ENCODE measurements at regions of chr6 and their contacts with region 1.

Region 1: GRCh38 chr6:25070547-25071366 is 135.0 kb upstream of the RIPOR2 start:
- DNase-seq: peak; percentile 88
- H3K4me3 ChIP-seq: no peak overlapping the region
- H3K27ac ChIP-seq: no peak overlapping the region
- H3K4me1 ChIP-seq: no peaks in the 10 kb centered on the region
- H3K27me3 ChIP-seq: no peaks in the 10 kb centered on the region
- CTCF ChIP-seq: peak; percentile 89

Region 2: GRCh38 chr6:24581084-24581669 is 489.6 kb before region 1 on chr6:
- CTCF ChIA-PET with region 1: interaction called, 3 read pairs
- POLR2A ChIA-PET with region 1: no interaction called
- intact Hi-C with region 1: loop called (anchors 5 kb)
- DNase-seq: peak; percentile 80
- H3K4me3 ChIP-seq: no peak overlapping the region
- H3K27ac ChIP-seq: no peak overlapping the region
- H3K4me1 ChIP-seq: peaks cover 17% of the 10 kb centered on the region
- H3K27me3 ChIP-seq: peaks cover 20% of the 10 kb centered on the region
- CTCF ChIP-seq: peak; percentile 90

Region 3: GRCh38 chr6:24720604-24721460 is 349.9 kb before region 1 on chr6:
- CTCF ChIA-PET with region 1: no interaction called
- POLR2A ChIA-PET with region 1: no interaction called
- intact Hi-C with region 1: loop called (anchors 2 kb)
- DNase-seq: peak; percentile 100
- H3K4me3 ChIP-seq: peak overlapping the region; percentile 81
- H3K27ac ChIP-seq: peak overlapping the region; percentile 94
- H3K4me1 ChIP-seq: peaks cover 11% of the 10 kb centered on the region
- H3K27me3 ChIP-seq: no peaks in the 10 kb centered on the region
- CTCF ChIP-seq: no peak

Region 4: GRCh38 chr6:24774696-24775519 is 295.8 kb before region 1 on chr6 and contains the start of gene GMNN:
- CTCF ChIA-PET with region 1: no interaction called
- POLR2A ChIA-PET with region 1: no interaction called
- intact Hi-C with region 1: loop called (anchors 10 kb)
- DNase-seq: peak; percentile 98
- H3K4me3 ChIP-seq: peak within 1 kb of the TSS; percentile 76
- H3K27ac ChIP-seq: peak within 1 kb of the TSS; percentile 99
- H3K4me1 ChIP-seq: peaks cover 10% of the 10 kb centered on the region
- H3K27me3 ChIP-seq: no peaks in the 10 kb centered on the region
- CTCF ChIP-seq: no peak
- total RNA-seq, gene GMNN: 100 and 111 TPM in 2 replicates

Region 5: GRCh38 chr6:24855395-24856245 is 215.1 kb before region 1 on chr6:
- CTCF ChIA-PET with region 1: interaction called, 20 read pairs
- POLR2A ChIA-PET with region 1: no interaction called
- intact Hi-C with region 1: loop called (anchors 1 kb)
- DNase-seq: peak; percentile 79
- H3K4me3 ChIP-seq: no peak overlapping the region
- H3K27ac ChIP-seq: no peak overlapping the region
- H3K4me1 ChIP-seq: peaks cover 5% of the 10 kb centered on the region
- H3K27me3 ChIP-seq: no peaks in the 10 kb centered on the region
- CTCF ChIP-seq: peak; percentile 89

Measured in A673 (cell line).